ENCODE measurements at regions of chr2 and their contacts with region 1.

Region 1: DNA sequence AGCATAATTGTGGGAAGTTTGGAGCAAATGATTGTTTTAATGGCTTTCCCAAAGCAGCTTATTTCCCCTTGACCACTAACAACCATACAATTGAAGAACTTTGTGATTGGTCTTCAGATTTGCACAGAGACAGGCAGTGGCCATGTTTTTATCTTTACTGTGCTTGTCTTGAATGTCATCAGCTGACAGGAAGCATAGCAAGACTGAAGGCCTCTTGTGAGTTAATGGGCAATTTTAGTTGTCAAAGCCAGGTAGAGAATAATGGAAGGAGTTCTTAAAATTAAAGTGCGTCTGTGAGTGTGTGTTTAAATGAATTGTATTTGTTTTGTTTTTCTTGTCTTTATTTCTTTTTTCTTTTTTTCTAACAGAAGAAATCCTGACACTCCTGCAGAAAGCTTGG is 809.9 kb downstream of the TSN start:
- DNase-seq: no peak
- ATAC-seq: no peak
- H3K4me3 ChIP-seq: no peak overlapping the region
- H3K27ac ChIP-seq: no peak overlapping the region
- H3K4me1 ChIP-seq: no peaks in the 10 kb centered on the region
- H3K27me3 ChIP-seq: no peaks in the 10 kb centered on the region
- CTCF ChIP-seq: no peak
- EP300 ChIP-seq: no peak
- POLR2A ChIP-seq: no peak
- RAD21 ChIP-seq: no peak

Region 2: GRCh38 chr2:122590524-122590923 is 25.2 kb after region 1 on chr2:
- CTCF ChIA-PET with region 1: no interaction called
- POLR2A ChIA-PET with region 1: no interaction called
- in situ Hi-C with region 1: no loop called
- intact Hi-C with region 1: loop called (anchors 2 kb)
- DNase-seq: no peak
- ATAC-seq: no peak
- H3K4me3 ChIP-seq: no peak overlapping the region
- H3K27ac ChIP-seq: no peak overlapping the region
- H3K4me1 ChIP-seq: no peaks in the 10 kb centered on the region
- H3K27me3 ChIP-seq: no peaks in the 10 kb centered on the region
- CTCF ChIP-seq: no peak
- EP300 ChIP-seq: no peak
- POLR2A ChIP-seq: no peak
- RAD21 ChIP-seq: no peak

Region 3: GRCh38 chr2:122610948-122611609 is 45.7 kb after region 1 on chr2:
- CTCF ChIA-PET with region 1: no interaction called
- POLR2A ChIA-PET with region 1: no interaction called
- in situ Hi-C with region 1: no loop called
- intact Hi-C with region 1: no loop called
- DNase-seq: no peak
- ATAC-seq: no peak
- H3K4me3 ChIP-seq: no peak overlapping the region
- H3K27ac ChIP-seq: no peak overlapping the region
- H3K4me1 ChIP-seq: no peaks in the 10 kb centered on the region
- H3K27me3 ChIP-seq: no peaks in the 10 kb centered on the region
- CTCF ChIP-seq: no peak
- EP300 ChIP-seq: no peak
- POLR2A ChIP-seq: no peak
- RAD21 ChIP-seq: no peak

Measured in HepG2 (cell line).